Spleen (tissue), 13 donors: ENCODE measurements at regions of chr3 and their contacts with region 1.

Region 1: GRCh38 chr3:153043729-153044328 is 118.2 kb upstream of the RAP2B start:
- DNase-seq: no peak
- H3K4me3 ChIP-seq: no peak overlapping the region
- H3K27ac ChIP-seq: no peak overlapping the region
- H3K4me1 ChIP-seq: peaks cover 0 to 12% (median 7%) of the 10 kb centered on the region in 6 donors
- H3K27me3 ChIP-seq: peaks cover 0 to 4% (median 0%) of the 10 kb centered on the region in 7 donors
- CTCF ChIP-seq: no peak
- POLR2A ChIP-seq: no peak

Region 2: DNA sequence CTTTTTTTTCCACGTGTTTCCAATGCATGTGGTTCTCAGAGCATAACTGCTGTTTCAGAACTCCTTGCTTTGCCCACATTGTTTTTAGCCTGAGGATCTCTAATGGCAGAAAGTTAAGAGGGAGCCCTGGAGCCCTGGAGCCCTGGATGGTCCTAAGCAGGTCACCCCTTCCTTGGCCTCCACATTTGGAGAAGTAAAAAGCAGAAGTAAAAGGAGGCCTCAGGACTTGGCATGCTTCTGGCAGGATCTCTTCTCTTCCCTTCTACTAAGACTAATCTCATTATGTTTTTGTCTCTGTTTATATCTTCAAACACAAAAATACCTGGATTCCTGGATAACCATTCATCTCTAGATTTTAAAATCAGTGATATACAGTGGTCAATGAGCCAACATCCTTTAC is 158.8 kb before region 1 on chr3:
- intact Hi-C with region 1: no loop called
- DNase-seq: no peak
- H3K4me3 ChIP-seq: no peak overlapping the region
- H3K27ac ChIP-seq: no peak overlapping the region
- H3K4me1 ChIP-seq: no peaks in the 10 kb centered on the region
- H3K27me3 ChIP-seq: no peaks in the 10 kb centered on the region
- CTCF ChIP-seq: no peak
- POLR2A ChIP-seq: no peak

Region 3: GRCh38 chr3:153595186-153595815 is 551.5 kb after region 1 on chr3:
- intact Hi-C with region 1: loop called (anchors 10 kb)
- DNase-seq: no peak
- H3K4me3 ChIP-seq: no peak overlapping the region
- H3K27ac ChIP-seq: no peak overlapping the region
- H3K4me1 ChIP-seq: peaks cover 0 to 2% (median 0%) of the 10 kb centered on the region in 6 donors
- H3K27me3 ChIP-seq: no peaks in the 10 kb centered on the region
- CTCF ChIP-seq: peak in 7 of 11 experiments; percentile 20 to 46 (median 32)
- POLR2A ChIP-seq: no peak

Region 4: GRCh38 chr3:153768561-153769469 is 725.0 kb after region 1 on chr3:
- intact Hi-C with region 1: loop called (anchors 5 kb)
- DNase-seq: peak; percentile 71
- H3K4me3 ChIP-seq: no peak overlapping the region
- H3K27ac ChIP-seq: no peak overlapping the region
- H3K4me1 ChIP-seq: no peaks in the 10 kb centered on the region
- H3K27me3 ChIP-seq: peaks cover 0 to 4% (median 0%) of the 10 kb centered on the region in 7 donors
- CTCF ChIP-seq: peak; percentile 49 to 80 (median 77)
- POLR2A ChIP-seq: no peak